Calu3 (cell line): ENCODE measurements at regions of chr19 and their contacts with region 1.

Region 1: DNA sequence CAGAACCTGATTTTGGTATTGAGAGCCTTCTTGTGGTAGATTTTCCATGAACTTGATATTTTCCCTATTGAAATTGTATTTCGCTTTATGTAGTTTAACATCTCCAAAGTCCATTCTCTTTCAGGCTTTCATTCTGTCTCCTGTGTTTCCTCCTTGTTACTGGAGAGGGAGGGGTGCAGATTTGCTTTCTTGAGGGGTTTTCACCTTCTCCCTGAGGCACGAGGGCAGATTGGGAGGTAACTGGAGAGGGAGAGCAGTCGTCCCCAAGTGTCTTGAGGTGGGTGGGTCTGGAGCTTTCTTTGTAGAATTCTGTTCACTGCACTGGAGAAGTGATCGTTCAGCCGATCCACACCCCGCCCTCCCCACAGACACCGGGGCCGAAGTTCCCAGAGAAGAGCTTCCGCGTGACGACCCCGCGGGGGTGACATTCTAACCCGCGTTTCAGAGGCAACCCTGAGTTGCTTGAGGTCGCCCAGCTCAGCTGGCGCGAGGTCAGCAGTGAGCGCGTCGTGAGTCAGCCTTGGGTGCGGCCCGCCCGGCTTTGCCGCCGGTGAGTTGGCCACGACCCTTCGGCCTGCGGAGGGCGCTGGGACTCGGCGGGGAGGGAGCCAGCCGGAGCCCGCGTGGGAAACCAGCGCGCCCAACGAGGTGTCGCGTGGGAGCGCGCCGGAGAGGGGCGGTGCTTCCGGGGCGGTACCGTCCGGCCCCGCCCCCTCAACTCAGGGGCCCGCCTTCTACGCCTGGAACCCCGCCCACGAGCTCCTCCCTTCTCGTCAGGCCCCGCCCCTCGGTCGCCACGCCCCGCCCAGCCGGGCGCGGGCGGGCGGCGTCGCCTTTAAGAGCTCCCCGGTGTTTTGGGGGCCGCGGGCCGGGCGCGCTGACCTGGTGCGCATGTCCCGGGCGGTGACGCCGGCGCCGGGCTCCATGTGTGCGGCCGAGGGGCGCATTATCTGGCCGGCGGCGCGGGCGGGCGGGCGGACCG is at the start of gene GATAD2A:
- DNase-seq: peak; percentile 85
- H3K4me3 Mint-ChIP-seq: peak within 1 kb of the TSS; percentile 85
- H3K27ac Mint-ChIP-seq: peak within 1 kb of the TSS; percentile 84
- H3K4me1 Mint-ChIP-seq: peaks cover 26% of the 10 kb centered on the region
- H3K27me3 Mint-ChIP-seq: no peaks in the 10 kb centered on the region
- CTCF ChIP-seq: no peak
- total RNA-seq, gene GATAD2A: 79.8 and 83.7 TPM in 2 replicates

Region 2: GRCh38 chr19:19366612-19367396 is 38.4 kb before region 1 on chr19:
- CTCF ChIA-PET with region 1: interaction called, 5 read pairs
- intact Hi-C with region 1: loop called (anchors 5 kb)
- DNase-seq: peak; percentile 85
- H3K4me3 Mint-ChIP-seq: no peak overlapping the region
- H3K27ac Mint-ChIP-seq: no peak overlapping the region
- H3K4me1 Mint-ChIP-seq: peaks cover 9% of the 10 kb centered on the region
- H3K27me3 Mint-ChIP-seq: no peaks in the 10 kb centered on the region
- CTCF ChIP-seq: peak; percentile 83

Region 3: DNA sequence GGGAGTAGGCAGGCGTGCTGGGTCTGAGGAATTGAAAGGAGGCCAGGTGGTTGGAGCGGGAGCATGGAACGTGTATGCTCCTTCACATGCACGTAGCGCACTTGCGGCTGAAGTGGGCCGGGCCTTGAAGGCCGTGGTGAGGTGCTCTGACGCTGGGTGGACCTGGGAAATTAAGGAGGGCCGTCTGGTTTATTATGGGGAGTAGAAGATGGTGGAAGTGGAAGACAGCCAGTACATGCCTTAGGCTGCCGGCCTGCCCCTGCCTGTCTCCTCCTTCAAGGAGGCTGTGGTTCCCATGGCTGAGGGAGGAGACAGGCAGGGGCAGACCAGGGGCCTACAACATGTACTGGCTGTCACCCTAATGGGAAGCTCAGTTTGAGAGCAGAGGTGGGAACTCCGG is 24.2 kb after region 1 on chr19:
- CTCF ChIA-PET with region 1: no interaction called
- intact Hi-C with region 1: no loop called
- DNase-seq: no peak
- H3K4me3 Mint-ChIP-seq: no peak overlapping the region
- H3K27ac Mint-ChIP-seq: no peak overlapping the region
- H3K4me1 Mint-ChIP-seq: peaks cover 8% of the 10 kb centered on the region
- H3K27me3 Mint-ChIP-seq: no peaks in the 10 kb centered on the region
- CTCF ChIP-seq: no peak

Region 4: DNA sequence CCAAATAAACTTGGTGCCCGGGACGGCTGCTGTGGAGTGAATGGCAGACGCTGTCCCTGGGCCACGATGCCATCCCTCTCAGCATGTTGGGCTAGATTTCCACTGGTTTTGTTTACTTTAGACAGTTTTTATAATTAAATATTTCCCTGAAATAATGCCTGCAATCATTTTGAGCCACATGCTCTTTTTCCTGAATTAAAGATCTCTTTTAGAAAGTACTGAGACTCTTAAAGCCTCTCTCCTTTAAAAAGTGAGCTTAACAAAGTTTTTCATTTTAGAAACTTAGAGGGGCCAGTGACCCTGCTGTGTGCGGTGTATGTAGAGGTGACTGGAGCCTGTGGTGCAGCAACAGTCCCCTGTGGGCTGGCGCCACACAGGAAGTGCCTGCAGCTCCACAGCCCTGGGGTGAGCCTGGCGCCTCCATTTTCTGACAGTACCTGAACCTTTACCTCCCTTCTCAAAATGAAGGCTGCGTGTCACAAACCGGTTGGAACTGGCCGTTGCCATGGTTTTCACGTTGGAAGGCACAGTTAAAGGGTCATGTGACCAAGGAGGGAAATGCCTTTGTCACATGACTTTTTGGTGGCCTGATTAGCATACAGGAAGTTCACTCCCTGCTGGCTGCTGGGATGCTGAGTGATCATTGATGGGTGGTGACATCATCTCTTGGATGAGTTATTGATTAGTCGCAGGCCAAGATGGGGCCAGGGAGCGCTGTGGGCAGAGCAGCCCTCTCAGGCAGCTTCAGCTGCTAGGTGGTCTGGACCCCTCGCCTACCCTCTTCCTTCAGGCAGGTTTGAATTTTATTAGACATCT is 83.9 kb after region 1 on chr19:
- CTCF ChIA-PET with region 1: interaction called, 6 read pairs
- intact Hi-C with region 1: loop called (anchors 5 kb)
- DNase-seq: peak; percentile 76
- H3K4me3 Mint-ChIP-seq: peak overlapping the region; percentile 30
- H3K27ac Mint-ChIP-seq: peak overlapping the region; percentile 88
- H3K4me1 Mint-ChIP-seq: peaks cover 34% of the 10 kb centered on the region
- H3K27me3 Mint-ChIP-seq: no peaks in the 10 kb centered on the region
- CTCF ChIP-seq: no peak

Region 5: GRCh38 chr19:19526581-19527370 is 121.6 kb after region 1 on chr19:
- CTCF ChIA-PET with region 1: no interaction called
- intact Hi-C with region 1: no loop called
- DNase-seq: no peak
- H3K4me3 Mint-ChIP-seq: no peak overlapping the region
- H3K27ac Mint-ChIP-seq: no peak overlapping the region
- H3K4me1 Mint-ChIP-seq: no peaks in the 10 kb centered on the region
- H3K27me3 Mint-ChIP-seq: no peaks in the 10 kb centered on the region
- CTCF ChIP-seq: no peak